HepG2 (cell line): ENCODE measurements at regions of chr11 and their contacts with region 1.

Region 1: GRCh38 chr11:87007963-87008362 is 29.8 kb upstream of the TMEM135 start:
- DNase-seq: no peak
- ATAC-seq: no peak
- H3K4me3 ChIP-seq: no peak overlapping the region
- H3K27ac ChIP-seq: no peak overlapping the region
- H3K4me1 ChIP-seq: peaks cover 61% of the 10 kb centered on the region
- H3K27me3 ChIP-seq: no peaks in the 10 kb centered on the region
- CTCF ChIP-seq: no peak
- EP300 ChIP-seq: no peak
- POLR2A ChIP-seq: no peak
- RAD21 ChIP-seq: no peak

Region 2: DNA sequence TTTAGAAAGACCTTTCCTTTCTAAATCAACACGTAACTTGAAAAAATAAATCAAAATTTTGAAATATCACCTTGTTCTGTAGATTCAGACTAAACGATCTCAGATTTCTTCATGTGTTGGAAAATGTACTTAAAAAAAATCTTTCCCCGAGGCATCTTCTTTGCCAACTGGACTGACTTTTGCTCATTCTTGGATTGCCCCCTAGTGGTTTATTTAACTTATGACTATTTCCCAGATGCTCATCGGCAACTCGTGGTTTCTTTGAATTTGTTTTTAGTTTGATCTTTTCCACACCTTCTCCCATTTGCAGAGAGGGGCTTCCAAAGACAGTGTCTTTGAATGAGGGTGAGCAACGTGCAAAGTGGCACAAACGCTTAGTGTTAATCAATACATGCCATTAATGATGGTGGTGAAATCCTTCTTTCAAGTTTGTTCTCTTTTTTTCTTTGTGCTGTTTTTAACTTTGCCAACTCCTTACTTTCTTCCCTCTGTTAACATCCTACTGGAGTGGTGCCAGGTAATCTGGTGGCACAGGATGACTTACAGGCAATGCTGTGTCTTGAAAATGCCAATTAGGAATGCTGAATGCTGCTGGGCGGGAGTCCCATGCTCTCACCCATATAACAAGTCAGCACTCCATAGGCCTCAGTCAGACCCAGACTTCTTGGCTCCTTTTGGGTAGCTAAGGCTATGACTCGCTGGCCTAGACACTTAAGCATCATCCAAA is 189.3 kb before region 1 on chr11:
- CTCF ChIA-PET with region 1: no interaction called
- POLR2A ChIA-PET with region 1: no interaction called
- in situ Hi-C with region 1: no loop called
- intact Hi-C with region 1: no loop called
- DNase-seq: peak; percentile 42
- ATAC-seq: peak; percentile 50; the same call in 1 of the 3 replicates
- H3K4me3 ChIP-seq: no peak overlapping the region
- H3K27ac ChIP-seq: no peak overlapping the region
- H3K4me1 ChIP-seq: no peaks in the 10 kb centered on the region
- H3K27me3 ChIP-seq: peaks cover 0 to 7% of the 10 kb centered on the region in 2 experiments; a peak in 2 of 5 replicates
- CTCF ChIP-seq: peak; percentile 72
- EP300 ChIP-seq: no peak
- POLR2A ChIP-seq: no peak
- RAD21 ChIP-seq: peak; percentile 30; the same call in 1 of the 2 replicates

Region 3: DNA sequence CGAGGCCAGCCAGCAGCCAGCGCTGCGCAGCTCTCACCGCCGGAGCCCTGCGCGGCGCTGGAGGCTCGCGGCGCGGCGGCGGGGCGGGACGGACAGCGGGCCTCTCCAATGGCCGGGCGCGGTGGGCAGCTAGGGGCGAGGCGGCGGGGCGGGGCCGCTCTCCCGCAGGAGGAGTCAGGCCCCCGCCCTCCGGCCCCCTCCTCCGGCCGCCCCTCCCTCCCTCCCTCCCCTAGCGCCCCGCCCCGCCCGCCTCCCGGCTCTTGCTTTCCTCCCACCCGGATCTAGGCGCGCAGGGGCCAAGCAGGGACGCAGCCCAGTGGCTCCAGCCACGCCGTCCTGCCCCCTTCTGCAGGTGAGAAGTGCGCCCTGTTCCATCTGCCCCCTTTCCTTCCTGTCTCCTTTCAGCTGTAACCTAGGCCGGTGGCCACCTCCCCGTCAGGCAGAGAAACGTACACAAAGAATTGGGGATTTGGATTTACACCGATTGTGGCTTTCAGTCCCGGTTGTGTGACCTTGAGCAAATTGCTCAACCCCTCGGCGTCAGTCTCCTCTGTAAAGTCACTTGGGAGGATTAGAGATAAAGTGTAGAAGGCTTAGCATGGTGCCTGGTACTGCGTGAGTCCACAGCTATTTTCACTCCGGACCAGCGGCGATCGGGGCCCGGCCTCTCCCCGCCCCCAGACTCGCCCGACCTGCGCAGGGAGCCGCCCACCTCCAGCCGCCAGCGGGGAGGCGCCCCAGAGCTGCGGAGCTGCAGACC is 52.4 kb before region 1 on chr11 and contains the start of gene FZD4:
- CTCF ChIA-PET with region 1: no interaction called
- POLR2A ChIA-PET with region 1: interaction called, 12 read pairs
- in situ Hi-C with region 1: no loop called
- intact Hi-C with region 1: no loop called
- DNase-seq: peak; percentile 88
- ATAC-seq: peak; percentile 92
- H3K4me3 ChIP-seq: peak within 1 kb of the TSS; percentile 79 to 87 (median 82)
- H3K27ac ChIP-seq: peak within 1 kb of the TSS; percentile 96
- H3K4me1 ChIP-seq: peaks cover 50% of the 10 kb centered on the region
- H3K27me3 ChIP-seq: no peaks in the 10 kb centered on the region; a peak in 1 of 5 replicates
- CTCF ChIP-seq: peak; percentile 71
- EP300 ChIP-seq: peak in 1 of 2 experiments; percentile 23; a peak in 1 of 4 replicates
- POLR2A ChIP-seq: peak; percentile 67 to 68
- RAD21 ChIP-seq: peak; percentile 78; the same call in 1 of the 2 replicates
- total RNA-seq, gene FZD4: 34.7 and 46.5 TPM in 2 replicates

Region 4: GRCh38 chr11:86978756-86979608 is 29.0 kb before region 1 on chr11:
- CTCF ChIA-PET with region 1: no interaction called
- POLR2A ChIA-PET with region 1: interaction called, 5 read pairs
- in situ Hi-C with region 1: no loop called
- intact Hi-C with region 1: loop called (anchors 2 kb)
- DNase-seq: no peak
- ATAC-seq: peak; percentile 77
- H3K4me3 ChIP-seq: no peak overlapping the region
- H3K27ac ChIP-seq: peak overlapping the region; percentile 28
- H3K4me1 ChIP-seq: peaks cover 59% of the 10 kb centered on the region
- H3K27me3 ChIP-seq: no peaks in the 10 kb centered on the region
- CTCF ChIP-seq: peak; percentile 58
- EP300 ChIP-seq: no peak
- POLR2A ChIP-seq: no peak
- RAD21 ChIP-seq: peak; percentile 37; the same call in 1 of the 2 replicates

Region 5: GRCh38 chr11:87030458-87031054 is 22.6 kb after region 1 on chr11:
- CTCF ChIA-PET with region 1: no interaction called
- POLR2A ChIA-PET with region 1: interaction called, 11 read pairs
- in situ Hi-C with region 1: loop called (anchors 5 kb)
- intact Hi-C with region 1: no loop called
- DNase-seq: peak; percentile 29
- ATAC-seq: no peak
- H3K4me3 ChIP-seq: no peak overlapping the region
- H3K27ac ChIP-seq: no peak overlapping the region
- H3K4me1 ChIP-seq: peaks cover 53% of the 10 kb centered on the region
- H3K27me3 ChIP-seq: no peaks in the 10 kb centered on the region
- CTCF ChIP-seq: no peak
- EP300 ChIP-seq: no peak
- POLR2A ChIP-seq: no peak
- RAD21 ChIP-seq: no peak

Region 6: DNA sequence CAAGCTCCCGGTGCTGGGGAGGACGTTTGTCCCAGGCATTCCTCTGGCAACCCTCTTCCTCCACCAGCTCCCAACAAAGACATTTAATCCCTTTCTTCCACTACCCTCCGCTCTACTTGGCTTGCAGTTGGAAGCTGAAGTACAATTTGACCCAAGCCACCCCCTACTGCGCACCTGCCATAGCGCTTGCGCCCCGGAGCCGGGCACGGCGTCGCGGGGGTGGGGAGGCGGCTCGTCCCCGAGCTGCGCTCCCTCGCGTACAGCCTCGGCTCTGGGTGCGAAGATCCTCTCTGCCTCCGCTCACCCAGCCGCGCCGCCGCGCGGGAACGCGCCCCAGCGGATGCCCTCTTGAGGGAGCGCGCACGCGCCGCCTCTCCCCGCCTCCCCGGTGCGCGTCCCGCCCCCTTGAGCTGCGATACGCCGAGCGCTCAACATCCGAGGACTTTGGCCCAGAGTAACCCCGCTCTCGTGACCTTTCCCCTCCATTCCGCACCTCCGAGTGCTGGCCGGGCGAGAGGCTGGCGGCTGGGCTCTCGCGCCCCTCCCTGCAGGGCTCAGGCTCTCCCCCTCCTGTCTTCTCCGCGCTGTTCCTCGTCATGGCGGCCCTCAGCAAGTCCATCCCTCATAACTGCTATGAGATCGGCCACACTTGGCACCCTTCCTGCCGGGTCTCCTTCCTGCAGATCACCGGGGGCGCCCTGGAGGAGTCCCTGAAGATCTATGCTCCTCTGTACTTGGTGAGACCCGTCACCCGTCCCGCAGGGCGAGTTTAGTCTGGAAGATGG is 29.7 kb after region 1 on chr11 and contains the start of gene TMEM135:
- CTCF ChIA-PET with region 1: no interaction called
- POLR2A ChIA-PET with region 1: interaction called, 48 read pairs
- in situ Hi-C with region 1: loop called (anchors 5 kb)
- intact Hi-C with region 1: loop called (anchors 1 kb)
- DNase-seq: peak; percentile 94
- ATAC-seq: peak; percentile 96
- H3K4me3 ChIP-seq: peak within 1 kb of the TSS; percentile 79 to 98 (median 93)
- H3K27ac ChIP-seq: peak within 1 kb of the TSS; percentile 95
- H3K4me1 ChIP-seq: peaks cover 60% of the 10 kb centered on the region
- H3K27me3 ChIP-seq: no peaks in the 10 kb centered on the region; a peak in 1 of 5 replicates
- CTCF ChIP-seq: peak; percentile 60
- EP300 ChIP-seq: peak; percentile 50 to 67; a peak in 3 of 4 replicates
- POLR2A ChIP-seq: peak; percentile 79 to 83
- RAD21 ChIP-seq: peak; percentile 64; the same call in 1 of the 2 replicates
- total RNA-seq, gene TMEM135: 88.9 and 137 TPM in 2 replicates

Region 7: GRCh38 chr11:87081358-87081757 is 73.4 kb after region 1 on chr11:
- CTCF ChIA-PET with region 1: no interaction called
- POLR2A ChIA-PET with region 1: no interaction called
- in situ Hi-C with region 1: no loop called
- intact Hi-C with region 1: no loop called
- DNase-seq: no peak
- ATAC-seq: no peak
- H3K4me3 ChIP-seq: no peak overlapping the region
- H3K27ac ChIP-seq: no peak overlapping the region
- H3K4me1 ChIP-seq: peaks cover 32% of the 10 kb centered on the region
- H3K27me3 ChIP-seq: no peaks in the 10 kb centered on the region
- CTCF ChIP-seq: no peak
- EP300 ChIP-seq: no peak
- POLR2A ChIP-seq: no peak
- RAD21 ChIP-seq: no peak

Region 8: GRCh38 chr11:87097582-87097981 is 89.6 kb after region 1 on chr11:
- CTCF ChIA-PET with region 1: no interaction called
- POLR2A ChIA-PET with region 1: no interaction called
- in situ Hi-C with region 1: no loop called
- intact Hi-C with region 1: loop called (anchors 5 kb)
- DNase-seq: peak; percentile 87
- ATAC-seq: peak; percentile 99
- H3K4me3 ChIP-seq: no peak overlapping the region
- H3K27ac ChIP-seq: peak overlapping the region; percentile 52
- H3K4me1 ChIP-seq: peaks cover 13% of the 10 kb centered on the region
- H3K27me3 ChIP-seq: no peaks in the 10 kb centered on the region; a peak in 1 of 5 replicates
- CTCF ChIP-seq: peak; percentile 85
- EP300 ChIP-seq: no peak
- POLR2A ChIP-seq: no peak
- RAD21 ChIP-seq: 0 out of 2 replicates have a peak, but pooled peaks have one; percentile 28

Region 9: DNA sequence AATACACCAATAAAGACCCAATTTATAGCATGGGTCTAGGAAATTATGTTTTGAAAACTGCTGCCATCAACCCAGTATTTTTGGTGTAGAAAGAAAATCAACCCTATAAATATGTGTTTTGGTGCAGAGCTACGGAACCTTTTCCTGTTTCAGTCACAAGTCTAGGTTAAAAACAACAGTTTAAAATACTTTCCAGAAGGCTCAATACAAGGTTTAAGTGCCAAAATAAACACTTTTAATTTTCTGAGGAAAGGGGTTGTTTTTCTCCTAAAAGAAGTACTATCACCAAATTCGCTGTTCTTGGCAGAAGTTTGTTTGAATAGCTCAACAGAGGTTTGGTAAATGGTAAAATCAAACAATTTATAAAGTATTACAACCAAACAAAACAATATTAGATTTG is 231.0 kb after region 1 on chr11:
- CTCF ChIA-PET with region 1: no interaction called
- POLR2A ChIA-PET with region 1: no interaction called
- in situ Hi-C with region 1: no loop called
- intact Hi-C with region 1: no loop called
- DNase-seq: no peak
- ATAC-seq: no peak
- H3K4me3 ChIP-seq: no peak overlapping the region
- H3K27ac ChIP-seq: no peak overlapping the region
- H3K4me1 ChIP-seq: no peaks in the 10 kb centered on the region
- H3K27me3 ChIP-seq: no peaks in the 10 kb centered on the region
- CTCF ChIP-seq: no peak
- EP300 ChIP-seq: no peak
- POLR2A ChIP-seq: no peak
- RAD21 ChIP-seq: no peak